Right cardiac atrium (tissue), 5 donors: ENCODE measurements at regions of chr20 and their contacts with region 1.

Region 1: DNA sequence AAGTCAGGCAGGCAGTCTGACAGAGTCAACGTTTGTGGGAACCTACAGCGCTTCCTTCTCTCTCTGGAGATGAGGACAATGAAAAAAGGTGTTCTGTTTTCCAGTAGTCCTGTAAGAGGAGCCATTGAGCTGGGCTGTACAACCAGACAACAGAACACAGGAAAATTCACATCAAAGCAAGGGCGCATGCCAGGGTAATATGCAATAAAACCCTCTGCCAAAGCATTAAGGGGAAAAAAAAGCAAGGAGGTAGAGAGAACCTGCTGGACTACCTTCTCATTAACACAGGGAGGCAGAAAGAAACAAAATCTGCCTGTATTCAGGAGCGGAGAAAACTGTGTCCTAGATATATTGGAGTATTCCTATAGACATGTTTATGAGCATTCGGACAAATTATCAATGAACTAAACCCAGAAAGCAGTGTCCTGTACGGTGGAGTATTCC is 1.3 kb downstream of the RNF24 start:
- DNase-seq: no peak
- ATAC-seq: peak; percentile 42 to 61
- H3K4me3 ChIP-seq: peak overlapping the region; percentile 55
- H3K27ac ChIP-seq: no peak overlapping the region
- H3K4me1 ChIP-seq: no peaks in the 10 kb centered on the region
- H3K27me3 ChIP-seq: no peaks in the 10 kb centered on the region

Region 2: DNA sequence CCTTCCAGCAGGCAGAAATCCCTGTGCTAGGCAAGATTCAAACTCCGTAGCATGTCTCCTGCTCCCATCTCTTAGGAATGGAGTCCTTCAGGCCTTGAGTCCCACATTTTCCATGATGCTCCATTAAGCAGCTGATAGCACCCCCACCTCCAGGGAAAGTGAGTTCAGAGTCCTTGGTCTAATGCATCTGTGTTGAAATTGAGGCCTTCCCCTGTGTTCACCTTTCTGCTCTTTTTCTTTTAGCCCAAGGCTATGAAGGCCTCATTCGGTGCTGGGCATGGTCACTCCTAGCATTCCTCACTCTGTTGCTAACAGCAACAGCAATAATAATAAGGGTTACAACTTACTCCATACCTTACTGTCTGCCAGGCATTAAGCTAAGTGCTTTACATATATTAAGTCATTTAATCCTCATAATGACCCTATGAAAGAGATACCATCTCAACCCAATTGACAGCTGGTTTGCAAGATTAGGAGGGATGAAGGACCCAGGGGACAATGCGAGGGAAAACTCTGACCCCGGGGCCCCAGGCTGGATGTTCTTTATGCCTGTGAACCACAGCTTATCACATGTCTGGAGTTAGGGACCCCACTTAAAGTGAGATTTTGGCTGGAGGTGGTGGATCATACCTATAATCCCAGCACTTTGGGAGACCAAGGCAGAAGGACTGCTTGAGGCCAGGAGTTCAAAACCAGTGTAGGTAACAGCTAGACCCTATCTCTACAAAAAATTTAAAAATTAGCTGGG is 142.3 kb before region 1 on chr20:
- intact Hi-C with region 1: no loop called
- DNase-seq: no peak
- ATAC-seq: no peak
- H3K4me3 ChIP-seq: no peak overlapping the region
- H3K27ac ChIP-seq: no peak overlapping the region
- H3K4me1 ChIP-seq: peaks cover 5% of the 10 kb centered on the region
- H3K27me3 ChIP-seq: no peaks in the 10 kb centered on the region

Region 3: DNA sequence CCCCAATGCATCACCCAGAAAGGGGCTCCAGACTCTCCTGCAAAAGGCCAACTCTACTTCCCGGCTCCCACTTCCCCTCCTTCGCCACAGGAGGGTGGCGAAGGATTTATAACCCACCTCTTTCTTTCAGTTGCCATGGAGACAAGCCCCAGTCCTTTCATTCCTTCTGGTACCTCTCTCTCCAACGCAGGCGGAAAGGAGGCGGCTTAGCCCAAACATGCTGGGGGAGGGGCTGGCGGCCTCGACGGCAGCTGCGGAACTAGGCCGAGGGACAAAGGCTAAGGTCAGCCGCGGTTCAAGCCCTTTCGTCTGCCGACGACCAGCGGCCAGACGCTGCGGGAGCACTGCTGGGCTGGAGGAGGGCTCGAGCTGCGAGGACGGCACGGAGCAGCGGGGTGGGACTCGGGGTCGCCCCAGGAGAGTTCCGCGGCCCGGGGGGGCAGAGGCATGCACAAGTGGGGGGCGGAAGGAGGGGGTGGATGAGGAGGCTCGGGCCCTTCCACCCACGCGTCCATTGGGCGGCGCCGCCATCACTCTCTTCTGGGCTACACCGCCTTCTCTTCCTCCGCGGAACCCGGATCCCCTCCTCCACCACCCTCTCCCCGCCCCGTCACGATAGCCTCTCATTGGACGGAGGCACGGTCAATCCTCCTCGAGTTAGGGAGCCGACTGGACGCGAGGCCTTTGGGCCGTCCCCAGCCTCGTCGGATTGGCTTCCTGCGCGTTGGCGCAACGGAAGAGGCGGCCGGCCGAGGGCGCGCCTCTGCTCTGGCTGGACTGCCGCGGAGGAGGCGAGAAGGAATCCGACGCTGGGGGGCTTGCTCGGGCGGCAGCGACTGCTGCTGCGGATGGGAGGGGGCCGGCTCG is 125.2 kb before region 1 on chr20 and contains the start of gene PANK2:
- intact Hi-C with region 1: loop called in 2 of 4 experiments (anchors 10 kb)
- DNase-seq: peak; percentile 100
- ATAC-seq: peak; percentile 98 to 99
- H3K4me3 ChIP-seq: peak within 1 kb of the TSS; percentile 75
- H3K27ac ChIP-seq: peak within 1 kb of the TSS; percentile 91
- H3K4me1 ChIP-seq: peaks cover 2% of the 10 kb centered on the region
- H3K27me3 ChIP-seq: no peaks in the 10 kb centered on the region
- total RNA-seq, gene PANK2: 22.1 to 24.4 (median 23.2) TPM

Region 4: DNA sequence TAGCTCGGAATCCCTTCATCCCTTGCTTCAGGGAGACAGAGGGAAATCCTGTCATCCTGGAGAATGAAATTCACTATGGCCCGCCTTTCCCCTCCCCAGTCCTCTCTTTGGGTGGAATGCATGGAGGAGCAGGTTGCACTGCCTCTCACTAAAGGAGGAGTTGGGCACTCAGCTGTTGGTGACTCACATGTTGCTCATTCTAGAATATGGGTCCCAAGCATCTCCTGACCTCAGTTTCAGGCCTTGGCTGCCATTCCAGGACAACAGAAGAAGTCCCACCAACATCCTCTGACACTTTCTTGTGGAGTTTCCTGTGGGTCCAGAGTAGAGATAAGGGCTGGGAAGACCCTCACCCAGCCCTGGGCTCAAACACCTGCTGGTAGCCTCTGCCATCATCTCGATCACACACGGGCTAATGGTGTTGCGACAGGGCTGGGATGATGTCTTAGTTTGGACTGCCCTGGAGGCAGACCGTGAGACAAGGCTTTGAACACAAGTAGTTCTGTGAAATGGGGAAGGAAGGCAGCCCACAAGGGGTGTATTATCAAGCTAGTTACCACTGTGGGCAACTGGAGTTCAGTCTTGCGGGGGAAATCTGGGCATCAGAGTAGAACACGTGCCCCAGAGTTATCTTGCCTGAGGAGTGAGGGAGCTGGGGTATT is 53.7 kb after region 1 on chr20:
- intact Hi-C with region 1: loop called in 2 of 4 experiments (anchors 5 kb)
- DNase-seq: no peak
- ATAC-seq: no peak
- H3K4me3 ChIP-seq: no peak overlapping the region
- H3K27ac ChIP-seq: no peak overlapping the region
- H3K4me1 ChIP-seq: peaks cover 6% of the 10 kb centered on the region
- H3K27me3 ChIP-seq: no peaks in the 10 kb centered on the region

Region 5: GRCh38 chr20:4073852-4074741 is 60.0 kb after region 1 on chr20:
- intact Hi-C with region 1: loop called in 2 of 4 experiments (anchors 5 kb)
- DNase-seq: no peak
- ATAC-seq: no peak
- H3K4me3 ChIP-seq: no peak overlapping the region
- H3K27ac ChIP-seq: no peak overlapping the region
- H3K4me1 ChIP-seq: no peaks in the 10 kb centered on the region
- H3K27me3 ChIP-seq: no peaks in the 10 kb centered on the region

Region 6: DNA sequence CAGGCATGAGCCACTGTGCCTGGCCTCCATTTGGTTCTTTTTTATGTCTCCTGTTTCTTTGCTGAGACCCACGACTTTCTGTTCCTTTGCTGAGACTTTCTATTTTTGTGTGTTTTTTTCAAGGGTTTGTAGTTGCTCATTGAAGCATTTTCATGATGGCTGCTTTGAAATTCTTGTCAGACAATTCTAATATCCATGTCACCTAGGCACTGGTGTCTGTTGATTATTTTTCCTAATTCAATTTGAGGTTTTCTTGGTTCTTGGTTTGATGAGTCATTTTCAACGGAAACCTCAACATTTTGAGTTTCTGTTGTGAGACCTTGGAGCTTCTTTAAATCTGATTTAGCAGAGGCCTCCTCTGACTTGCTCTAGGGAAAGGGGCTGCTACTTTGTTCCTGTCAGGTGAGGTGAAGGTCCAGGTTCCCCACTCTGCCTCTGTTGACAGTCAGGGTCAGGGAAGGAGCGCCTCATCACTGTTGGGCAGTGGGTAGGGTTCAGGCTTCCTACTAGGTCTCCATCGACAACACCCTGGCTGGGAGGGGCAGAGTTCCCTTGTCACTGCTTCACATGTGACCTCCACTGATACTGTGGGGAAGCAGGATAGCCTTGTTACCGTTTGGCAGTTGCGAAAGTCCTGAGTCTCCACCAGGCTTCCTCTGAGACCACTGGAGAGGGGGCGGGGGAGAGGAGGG is 68.5 kb after region 1 on chr20:
- intact Hi-C with region 1: loop called in 3 of 4 experiments (anchors 2 to 10 kb)
- DNase-seq: peak; percentile 63 to 80 (median 75)
- ATAC-seq: peak; percentile 70 to 76
- H3K4me3 ChIP-seq: no peak overlapping the region
- H3K27ac ChIP-seq: peak overlapping the region; percentile 88
- H3K4me1 ChIP-seq: peaks cover 4% of the 10 kb centered on the region
- H3K27me3 ChIP-seq: no peaks in the 10 kb centered on the region

Region 7: DNA sequence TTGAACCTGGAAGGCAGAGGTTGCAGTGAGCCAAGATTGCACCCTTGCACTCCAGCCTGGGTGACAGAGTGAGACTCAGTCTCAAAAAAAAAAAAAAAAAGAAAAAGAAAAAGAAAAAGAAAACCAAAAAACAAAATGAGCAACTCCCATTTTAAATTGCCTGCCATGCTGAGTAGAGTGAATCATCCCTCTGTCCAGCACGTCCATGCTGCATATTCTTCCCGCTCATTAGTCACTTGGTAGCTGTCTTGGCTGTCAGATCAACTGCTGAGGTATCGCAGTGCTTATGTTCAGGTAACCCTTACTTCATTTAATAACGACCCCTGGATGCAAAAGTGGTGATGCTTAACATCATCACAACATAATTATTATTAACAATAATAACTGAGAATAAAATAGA is 73.9 kb after region 1 on chr20:
- intact Hi-C with region 1: loop called in 3 of 4 experiments (anchors 2 to 10 kb)
- DNase-seq: no peak
- ATAC-seq: no peak
- H3K4me3 ChIP-seq: no peak overlapping the region
- H3K27ac ChIP-seq: no peak overlapping the region
- H3K4me1 ChIP-seq: peaks cover 4% of the 10 kb centered on the region
- H3K27me3 ChIP-seq: no peaks in the 10 kb centered on the region

Region 8: DNA sequence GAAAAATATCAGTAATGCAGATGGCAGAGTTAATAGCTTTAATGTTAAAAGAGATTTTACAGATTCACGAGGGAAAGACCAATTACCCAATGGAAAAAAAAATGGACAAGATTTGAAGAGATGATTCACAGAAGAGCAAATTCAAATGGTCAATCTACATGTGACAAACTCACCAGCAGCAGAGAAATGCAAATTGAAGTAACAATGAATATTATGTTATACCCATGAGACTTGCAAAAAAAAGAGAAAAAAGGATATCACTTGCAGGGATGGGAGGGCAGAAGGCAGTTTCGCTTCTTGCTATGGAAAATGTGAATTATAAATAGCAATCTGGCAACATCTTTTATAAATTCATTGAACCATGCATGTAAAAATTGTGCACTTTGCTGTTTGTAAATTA is 1246.8 kb after region 1 on chr20:
- intact Hi-C with region 1: no loop called
- DNase-seq: no peak
- ATAC-seq: no peak
- H3K4me3 ChIP-seq: no peak overlapping the region
- H3K27ac ChIP-seq: no peak overlapping the region
- H3K4me1 ChIP-seq: no peaks in the 10 kb centered on the region
- H3K27me3 ChIP-seq: no peaks in the 10 kb centered on the region